Activated CD4-positive, alpha-beta T cell treated with anti-CD3 and anti-CD28 coated beads, Interleukin-2, amount 10 ng/mL, durations not matched to agents 24 days and 14 days (primary cell): ENCODE measurements at regions of chr6 and their contacts with region 1.

Region 1: DNA sequence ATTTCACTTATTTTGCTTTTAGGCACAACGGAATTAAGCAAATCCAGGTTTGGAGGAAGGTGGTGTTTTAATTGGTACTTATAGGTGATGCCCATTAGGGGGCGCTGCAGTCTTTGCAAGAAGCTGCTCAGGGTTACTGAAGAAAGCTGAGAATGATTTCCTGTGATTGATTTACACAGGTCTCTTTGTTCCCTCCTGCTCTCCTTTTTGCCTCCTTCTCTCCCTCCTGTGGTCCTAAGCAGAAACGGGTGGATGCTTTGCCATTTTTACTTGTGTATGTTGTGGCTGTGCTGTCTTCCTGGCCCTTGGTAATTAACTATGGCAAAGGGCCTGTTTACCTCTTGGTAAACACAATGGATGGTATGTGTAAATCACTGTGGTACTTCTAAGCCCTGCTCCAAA is 97.8 kb downstream of the ANKS1A start:
- DNase-seq: peak; percentile 87
- H3K4me3 Mint-ChIP-seq: no peak overlapping the region
- H3K27ac Mint-ChIP-seq: no peak overlapping the region
- H3K4me1 Mint-ChIP-seq: peaks cover 2% of the 10 kb centered on the region
- H3K27me3 Mint-ChIP-seq: no peaks in the 10 kb centered on the region

Region 2: GRCh38 chr6:34855463-34855862 is 131.4 kb before region 1 on chr6:
- intact Hi-C with region 1: no loop called
- DNase-seq: no peak
- H3K4me3 Mint-ChIP-seq: no peak overlapping the region
- H3K27ac Mint-ChIP-seq: no peak overlapping the region
- H3K4me1 Mint-ChIP-seq: no peaks in the 10 kb centered on the region
- H3K27me3 Mint-ChIP-seq: no peaks in the 10 kb centered on the region

Region 3: GRCh38 chr6:35139908-35140655 is 153.2 kb after region 1 on chr6:
- intact Hi-C with region 1: loop called (anchors 2 kb)
- DNase-seq: peak; percentile 81
- H3K4me3 Mint-ChIP-seq: peak overlapping the region; percentile 8
- H3K27ac Mint-ChIP-seq: peak overlapping the region; percentile 2
- H3K4me1 Mint-ChIP-seq: peaks cover 19% of the 10 kb centered on the region
- H3K27me3 Mint-ChIP-seq: peaks cover 26% of the 10 kb centered on the region

Region 4: DNA sequence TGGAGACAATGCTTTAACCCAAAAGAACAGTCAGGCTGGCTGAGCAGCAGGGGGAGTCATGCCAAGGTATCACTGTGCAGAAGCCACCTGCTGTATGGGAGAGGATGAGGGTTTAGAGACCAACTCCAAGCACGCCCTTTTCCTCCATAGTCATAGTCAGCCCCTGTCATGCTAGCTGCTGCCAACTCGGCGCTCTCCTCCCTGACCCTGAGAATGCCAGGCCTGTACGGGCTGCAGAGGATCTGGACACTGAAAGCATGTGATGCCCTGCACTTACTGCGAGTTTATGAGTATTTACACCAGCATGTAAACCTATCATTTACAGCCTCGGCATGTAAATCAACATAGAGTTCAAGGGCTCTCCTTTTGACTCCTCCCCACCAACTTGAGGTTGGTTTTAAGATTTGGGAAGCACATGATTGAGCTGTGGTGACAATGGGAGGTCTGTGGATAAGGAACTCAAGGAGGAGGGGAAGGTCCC is 215.3 kb after region 1 on chr6:
- intact Hi-C with region 1: loop called (anchors 1 kb)
- DNase-seq: no peak
- H3K4me3 Mint-ChIP-seq: no peak overlapping the region
- H3K27ac Mint-ChIP-seq: no peak overlapping the region
- H3K4me1 Mint-ChIP-seq: no peaks in the 10 kb centered on the region
- H3K27me3 Mint-ChIP-seq: peaks cover 45% of the 10 kb centered on the region